ENCODE measurements at regions of chr3 and their contacts with region 1.

Region 1: GRCh38 chr3:16177962-16178627 is 3.6 kb downstream of the GALNT15 start:
- DNase-seq: peak in 1 of 2 donors; percentile 87
- H3K4me3 ChIP-seq: peak overlapping the region; percentile 47 to 48
- H3K27ac ChIP-seq: no peak overlapping the region
- H3K4me1 ChIP-seq: peaks cover 49% of the 10 kb centered on the region
- H3K27me3 ChIP-seq: no peaks in the 10 kb centered on the region
- CTCF ChIP-seq: peak; percentile 81 to 94 (median 94)
- POLR2A ChIP-seq: no peak

Region 2: DNA sequence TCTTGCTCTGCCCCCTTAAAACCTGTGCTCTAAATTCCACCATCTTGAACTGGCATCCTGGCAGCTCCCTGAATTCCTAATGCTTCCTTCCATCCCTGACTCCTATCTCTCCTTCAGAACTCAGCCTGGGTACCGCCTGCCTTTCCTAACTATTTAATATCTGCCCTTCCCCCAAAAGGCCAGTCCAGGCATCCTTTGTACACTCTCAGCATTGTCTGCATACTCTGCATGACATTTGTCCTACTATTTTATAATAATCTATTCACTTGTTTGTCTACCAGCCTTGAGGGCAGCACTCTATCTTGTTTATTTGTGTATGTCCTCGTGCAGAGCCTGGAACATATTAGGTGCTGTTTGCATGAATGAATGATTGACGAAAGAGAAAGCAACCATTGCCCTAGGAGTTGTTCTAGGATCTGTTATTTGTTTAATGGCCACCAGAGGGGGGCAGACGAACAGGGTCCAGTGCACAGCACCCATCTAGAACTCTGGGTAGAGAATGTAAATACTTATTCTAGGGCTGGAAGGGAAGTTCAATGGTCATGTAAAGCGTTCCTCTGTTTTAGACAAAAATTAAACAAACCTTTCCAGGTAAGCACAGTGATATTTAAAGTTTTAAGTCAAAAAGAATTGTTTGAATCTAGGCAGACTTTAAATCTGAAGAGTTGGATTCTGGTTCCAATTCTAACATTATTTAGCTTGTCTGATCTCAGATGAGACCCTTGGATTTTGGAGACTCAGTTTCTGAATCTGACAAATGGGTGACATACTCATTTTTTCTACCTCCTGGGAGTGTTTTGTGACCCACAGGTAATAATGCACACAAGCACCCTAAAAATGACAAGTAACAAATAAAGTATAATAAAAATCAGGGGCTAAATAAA is 129.4 kb before region 1 on chr3:
- intact Hi-C with region 1: loop called (anchors 2 kb)
- DNase-seq: no peak
- H3K4me3 ChIP-seq: no peak overlapping the region
- H3K27ac ChIP-seq: no peak overlapping the region
- H3K4me1 ChIP-seq: peaks cover 12% of the 10 kb centered on the region
- H3K27me3 ChIP-seq: no peaks in the 10 kb centered on the region
- CTCF ChIP-seq: peak; percentile 49 to 81 (median 57)
- POLR2A ChIP-seq: no peak

Region 3: GRCh38 chr3:16140116-16140893 is 37.8 kb before region 1 on chr3:
- intact Hi-C with region 1: loop called (anchors 5 kb)
- DNase-seq: peak in 1 of 2 donors; percentile 89
- H3K4me3 ChIP-seq: no peak overlapping the region
- H3K27ac ChIP-seq: peak overlapping the region; percentile 68
- H3K4me1 ChIP-seq: peaks cover 16% of the 10 kb centered on the region
- H3K27me3 ChIP-seq: no peaks in the 10 kb centered on the region
- CTCF ChIP-seq: no peak
- POLR2A ChIP-seq: no peak

Region 4: DNA sequence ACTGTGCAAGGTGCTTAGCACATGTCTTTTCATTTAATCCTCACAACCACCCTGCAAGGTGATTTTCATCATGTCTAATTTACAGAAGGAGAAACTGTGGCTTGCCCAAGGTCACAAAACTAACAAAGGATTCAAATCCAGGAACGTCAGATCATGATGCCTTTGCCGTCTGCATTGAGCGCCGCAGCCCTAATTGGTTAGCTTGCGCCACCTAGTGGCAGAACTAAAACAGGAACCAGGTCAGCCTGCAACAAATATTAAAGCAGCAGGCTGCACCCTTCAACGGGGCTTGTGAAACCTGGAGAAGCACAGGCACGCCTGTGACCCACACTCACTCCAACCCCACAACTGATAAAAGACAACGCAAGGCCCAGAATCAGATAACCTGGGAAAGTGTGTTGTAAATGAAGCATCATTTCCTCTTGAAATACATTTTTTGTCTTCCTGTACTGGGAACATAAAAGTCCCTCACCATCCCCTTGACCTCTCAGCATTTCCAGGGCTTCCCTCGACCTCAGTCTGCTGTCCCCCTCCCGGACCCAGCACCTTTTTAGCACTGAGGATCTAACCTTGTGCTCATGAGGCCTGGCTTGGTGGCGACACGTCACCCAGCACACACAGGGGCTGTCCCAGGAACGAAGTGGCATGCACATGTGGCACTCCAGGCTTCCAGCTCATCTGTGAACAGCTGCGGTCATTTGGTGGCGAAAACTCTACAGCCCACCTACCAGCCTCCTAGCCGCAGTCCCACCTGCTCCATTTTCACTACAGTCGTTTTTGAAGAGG is 69.4 kb after region 1 on chr3:
- intact Hi-C with region 1: loop called (anchors 5 kb)
- DNase-seq: no peak
- H3K4me3 ChIP-seq: no peak overlapping the region
- H3K27ac ChIP-seq: no peak overlapping the region
- H3K4me1 ChIP-seq: peaks cover 7% of the 10 kb centered on the region
- H3K27me3 ChIP-seq: no peaks in the 10 kb centered on the region
- CTCF ChIP-seq: peak; percentile 85 to 95 (median 85)
- POLR2A ChIP-seq: no peak